Aorta (tissue), 5 donors: ENCODE measurements at regions of chr9 and their contacts with region 1.

Region 1: DNA sequence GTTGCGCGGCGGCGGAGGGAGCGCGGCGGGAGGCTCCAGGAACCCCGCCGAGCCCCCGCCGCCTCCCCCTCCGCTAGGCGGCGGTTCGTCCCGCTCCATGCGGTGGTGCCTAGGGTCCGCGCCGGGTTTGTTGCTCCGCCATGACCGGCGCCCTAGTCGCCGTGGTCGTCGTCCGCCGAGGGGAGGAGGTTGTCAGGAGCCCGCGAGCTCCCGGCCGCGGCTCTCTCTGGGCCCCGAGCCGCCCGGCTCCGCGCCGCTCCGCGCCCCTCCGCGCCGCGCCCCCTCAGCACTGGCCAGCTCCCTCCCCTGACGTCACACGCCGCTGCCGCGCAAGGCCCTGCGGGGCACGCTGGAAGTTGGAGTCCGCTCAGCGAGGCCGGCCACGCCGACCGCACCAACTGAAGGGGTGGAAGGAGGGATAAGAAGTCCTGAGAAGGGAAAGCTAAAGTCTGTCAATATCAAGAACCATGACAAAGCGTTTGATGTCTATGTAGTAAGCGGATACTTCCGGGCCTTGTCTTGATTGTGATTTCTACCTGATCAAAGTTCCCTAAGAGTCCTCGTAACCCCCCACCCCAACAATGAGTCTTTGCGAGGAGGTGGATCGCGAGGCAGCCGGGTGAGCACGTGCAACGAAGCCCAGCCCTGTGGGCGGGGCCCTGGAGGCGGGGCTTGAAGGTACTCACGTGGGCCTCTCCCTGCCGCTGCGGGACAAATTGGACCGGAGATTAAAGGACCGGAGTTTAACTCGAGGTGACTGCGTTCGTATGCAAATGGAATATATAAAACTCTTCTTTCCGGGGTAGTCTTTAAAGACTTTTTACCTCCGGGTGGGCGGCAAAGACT is at the start of gene NR6A1:
- DNase-seq: peak; percentile 97 to 98
- ATAC-seq: peak; percentile 97
- H3K4me3 ChIP-seq: peak within 1 kb of the TSS; percentile 64 to 73
- H3K27ac ChIP-seq: no peak within 1 kb of the TSS
- H3K4me1 ChIP-seq: no peaks in the 10 kb centered on the region
- H3K27me3 ChIP-seq: no peaks in the 10 kb centered on the region
- total RNA-seq, gene NR6A1: 0.42 to 1.6 TPM

Region 2: DNA sequence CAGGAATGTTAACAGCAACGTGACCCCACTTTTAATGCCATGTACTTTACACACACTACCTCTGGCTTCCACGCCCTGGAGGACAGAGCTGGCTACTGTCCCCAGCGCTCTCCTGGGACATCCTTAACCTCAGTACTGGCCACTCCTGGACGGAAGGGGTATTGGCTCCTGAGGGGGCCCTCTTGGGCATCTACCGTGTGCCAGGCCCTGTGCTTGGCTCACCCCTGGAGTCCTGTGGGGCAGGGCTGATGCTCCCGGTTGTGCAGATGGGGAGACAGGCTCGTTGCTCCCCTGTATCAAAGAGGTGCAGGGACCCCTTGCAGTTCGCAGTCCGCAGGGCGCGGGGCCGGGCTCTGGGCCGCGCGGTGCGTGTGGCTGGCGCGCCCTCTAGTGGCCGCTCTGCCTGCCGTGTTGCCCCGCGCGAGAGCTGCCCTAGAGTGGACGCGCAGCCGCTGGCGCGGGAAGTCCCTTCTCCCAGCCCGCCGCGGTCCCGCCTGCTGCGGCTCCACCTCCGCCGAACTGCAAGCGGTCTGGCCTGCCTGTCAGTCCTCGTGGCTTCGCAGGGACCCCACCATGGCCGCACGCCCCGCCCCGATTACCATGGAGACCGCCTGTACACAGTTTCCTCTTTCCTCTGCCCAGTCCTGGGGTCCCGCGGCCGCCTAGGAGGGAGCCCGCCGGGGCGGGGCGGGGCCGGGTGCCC is 81.7 kb after region 1 on chr9 and contains the start of gene WDR38:
- intact Hi-C with region 1: loop called (anchors 1 kb)
- DNase-seq: peak; percentile 86 to 91
- ATAC-seq: peak; percentile 92
- H3K4me3 ChIP-seq: peak within 1 kb of the TSS in 1 of 2 donors; percentile 28
- H3K27ac ChIP-seq: no peak within 1 kb of the TSS
- H3K4me1 ChIP-seq: no peaks in the 10 kb centered on the region
- H3K27me3 ChIP-seq: no peaks in the 10 kb centered on the region
- total RNA-seq, gene WDR38: not detected

Region 3: DNA sequence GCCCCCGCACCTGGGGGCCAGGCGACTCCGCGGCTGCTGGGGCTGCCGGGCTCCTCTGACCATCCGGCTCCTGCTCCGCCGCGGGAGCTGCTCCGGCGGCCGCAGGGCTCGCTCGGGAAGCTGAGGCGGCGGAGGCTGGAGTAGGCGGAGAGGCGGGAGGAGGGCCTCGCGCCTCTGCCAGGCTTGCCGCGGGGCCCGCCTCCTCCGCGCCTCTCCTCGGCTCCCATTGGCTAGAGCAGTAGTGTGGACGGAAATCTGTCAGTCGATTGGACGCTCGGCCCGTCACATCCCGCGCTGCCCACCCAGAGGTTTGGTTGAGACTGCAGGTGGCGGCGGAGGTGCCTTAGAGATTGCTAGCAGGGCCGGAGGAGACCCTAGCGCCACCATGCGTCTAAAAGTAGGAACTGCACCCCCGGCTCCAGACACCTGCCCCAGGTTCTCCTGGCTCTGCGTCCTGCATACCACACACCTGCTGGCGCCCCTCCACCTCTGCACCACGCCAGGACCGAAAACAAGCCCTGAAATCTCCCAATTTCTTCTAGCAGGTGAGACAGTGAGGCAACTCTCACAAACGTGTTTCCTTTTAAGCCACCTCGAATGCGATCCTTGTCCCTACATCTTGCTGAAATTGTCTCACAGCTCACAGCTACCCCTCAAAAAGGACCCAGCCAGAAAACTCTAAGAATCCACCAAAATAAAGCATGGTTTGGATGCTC is 372.3 kb after region 1 on chr9 and contains the start of gene SCAI:
- intact Hi-C with region 1: loop called in 1 of 2 experiments (anchors 5 kb)
- DNase-seq: peak; percentile 99 to 100
- ATAC-seq: peak; percentile 100
- H3K4me3 ChIP-seq: peak within 1 kb of the TSS; percentile 74 to 88
- H3K27ac ChIP-seq: no peak within 1 kb of the TSS
- H3K4me1 ChIP-seq: no peaks in the 10 kb centered on the region
- H3K27me3 ChIP-seq: no peaks in the 10 kb centered on the region
- total RNA-seq, gene SCAI: 7.9 to 13.9 TPM

Region 4: GRCh38 chr9:125374443-125375309 is 603.4 kb after region 1 on chr9:
- intact Hi-C with region 1: loop called (anchors 2 to 5 kb)
- DNase-seq: peak; percentile 78 to 83
- ATAC-seq: peak; percentile 88
- H3K4me3 ChIP-seq: no peak overlapping the region
- H3K27ac ChIP-seq: no peak overlapping the region
- H3K4me1 ChIP-seq: no peaks in the 10 kb centered on the region
- H3K27me3 ChIP-seq: no peaks in the 10 kb centered on the region

Region 5: DNA sequence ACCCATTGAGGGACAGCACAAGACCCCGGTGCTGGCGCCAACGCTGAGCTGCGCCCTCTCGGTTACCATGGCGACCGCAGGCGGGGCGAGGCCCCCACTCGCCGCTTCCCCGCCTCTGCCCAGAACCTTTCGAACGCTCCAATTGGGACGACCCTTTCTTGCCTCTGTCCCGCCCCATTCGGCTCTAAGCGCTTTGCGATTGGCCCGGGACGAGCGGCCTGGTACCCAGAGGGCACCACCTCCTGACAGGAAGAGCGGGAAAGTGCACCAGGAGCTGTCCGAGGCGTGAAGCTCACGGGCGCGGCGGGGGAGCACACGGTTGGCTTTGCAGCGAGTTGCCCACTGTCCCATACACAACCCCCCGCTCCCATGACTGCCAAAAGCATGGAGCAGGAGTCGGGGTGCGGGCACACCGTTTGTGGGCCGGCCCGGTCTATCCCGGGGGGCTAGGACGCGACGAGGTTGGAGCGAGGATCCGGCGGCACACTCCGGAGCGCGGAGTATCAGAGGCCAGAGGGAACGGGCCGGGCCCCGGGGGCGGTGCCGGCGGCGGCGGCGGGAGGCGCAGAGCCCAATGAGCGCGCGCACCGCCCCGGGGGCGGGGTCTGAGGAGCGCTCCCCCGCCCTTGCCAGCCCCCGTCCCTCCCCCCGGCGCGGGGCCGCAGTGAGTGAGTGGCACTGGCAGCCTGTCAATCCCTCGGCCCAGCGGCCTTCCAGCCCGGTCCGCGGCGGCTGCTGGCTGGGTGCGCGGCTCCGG is 975.0 kb after region 1 on chr9:
- intact Hi-C with region 1: loop called in 1 of 2 experiments (anchors 5 kb)
- DNase-seq: peak; percentile 96 to 98
- ATAC-seq: peak; percentile 95
- H3K4me3 ChIP-seq: peak overlapping the region; percentile 93 to 99
- H3K27ac ChIP-seq: peak overlapping the region; percentile 76 to 78
- H3K4me1 ChIP-seq: no peaks in the 10 kb centered on the region
- H3K27me3 ChIP-seq: no peaks in the 10 kb centered on the region